GM10248 (cell line): ENCODE measurements at regions of chr12 and their contacts with region 1.

Region 1: GRCh38 chr12:56839915-56840325 is 76.8 kb downstream of the HSD17B6 start:
- DNase-seq: peak; percentile 41
- CTCF ChIP-seq: peak; percentile 70

Region 2: GRCh38 chr12:56359851-56360767 is 479.8 kb before region 1 on chr12 and contains the start of gene STAT2:
- CTCF ChIA-PET with region 1: no interaction called
- POLR2A ChIA-PET with region 1: no interaction called
- DNase-seq: peak; percentile 96
- CTCF ChIP-seq: no peak

Region 3: GRCh38 chr12:56851462-56851861 is 11.5 kb after region 1 on chr12:
- CTCF ChIA-PET with region 1: interaction called, 10 read pairs
- POLR2A ChIA-PET with region 1: no interaction called
- DNase-seq: no peak
- CTCF ChIP-seq: no peak